H1 (cell line): ENCODE measurements at regions of chr1 and their contacts with region 1.

Region 1: DNA sequence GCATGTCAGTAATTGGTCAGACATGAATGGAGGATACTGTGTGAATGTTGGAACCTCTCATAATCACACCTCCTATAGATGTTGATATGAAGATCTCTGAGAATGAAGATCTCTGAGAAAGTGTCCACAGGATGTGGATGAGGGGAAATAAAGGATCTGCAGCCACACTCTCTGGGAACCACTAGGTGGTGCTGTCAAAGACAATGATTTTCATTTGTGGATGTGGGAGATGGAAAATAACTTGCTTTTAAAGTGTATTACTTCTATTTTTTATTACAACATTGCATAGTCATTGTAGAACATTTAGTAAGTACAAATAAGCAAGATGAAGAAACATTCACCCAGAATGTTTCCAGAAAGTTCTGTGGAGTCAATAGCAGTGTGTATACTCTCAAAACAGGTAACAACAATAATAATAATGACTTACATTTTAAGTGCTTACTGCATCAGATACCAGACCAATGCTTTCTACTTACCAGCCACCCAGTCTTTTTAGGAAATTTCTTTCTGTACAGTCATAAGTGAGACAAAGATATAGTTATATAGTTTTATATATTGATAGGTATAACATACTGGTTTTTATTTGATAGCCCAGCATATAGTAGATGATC is 128.2 kb downstream of the ATG4C start:
- DNase-seq: no peak
- H3K4me3 ChIP-seq: no peak overlapping the region
- H3K27ac ChIP-seq: no peak overlapping the region
- H3K4me1 ChIP-seq: no peaks in the 10 kb centered on the region
- H3K27me3 ChIP-seq: no peaks in the 10 kb centered on the region
- CTCF ChIP-seq: peak in 2 of 3 experiments; percentile 42 to 80; a peak in 2 of 4 replicates
- EP300 ChIP-seq: no peak
- POLR2A ChIP-seq: no peak
- RAD21 ChIP-seq: peak in 1 of 2 experiments; percentile 50; a peak in 3 of 4 replicates

Region 2: GRCh38 chr1:62712336-62713243 is 199.5 kb before region 1 on chr1:
- CTCF ChIA-PET with region 1: no interaction called
- POLR2A ChIA-PET with region 1: no interaction called
- DNase-seq: no peak
- H3K4me3 ChIP-seq: no peak overlapping the region
- H3K27ac ChIP-seq: no peak overlapping the region
- H3K4me1 ChIP-seq: no peaks in the 10 kb centered on the region
- H3K27me3 ChIP-seq: no peaks in the 10 kb centered on the region
- CTCF ChIP-seq: no peak
- EP300 ChIP-seq: no peak
- POLR2A ChIP-seq: no peak
- RAD21 ChIP-seq: no peak

Region 3: DNA sequence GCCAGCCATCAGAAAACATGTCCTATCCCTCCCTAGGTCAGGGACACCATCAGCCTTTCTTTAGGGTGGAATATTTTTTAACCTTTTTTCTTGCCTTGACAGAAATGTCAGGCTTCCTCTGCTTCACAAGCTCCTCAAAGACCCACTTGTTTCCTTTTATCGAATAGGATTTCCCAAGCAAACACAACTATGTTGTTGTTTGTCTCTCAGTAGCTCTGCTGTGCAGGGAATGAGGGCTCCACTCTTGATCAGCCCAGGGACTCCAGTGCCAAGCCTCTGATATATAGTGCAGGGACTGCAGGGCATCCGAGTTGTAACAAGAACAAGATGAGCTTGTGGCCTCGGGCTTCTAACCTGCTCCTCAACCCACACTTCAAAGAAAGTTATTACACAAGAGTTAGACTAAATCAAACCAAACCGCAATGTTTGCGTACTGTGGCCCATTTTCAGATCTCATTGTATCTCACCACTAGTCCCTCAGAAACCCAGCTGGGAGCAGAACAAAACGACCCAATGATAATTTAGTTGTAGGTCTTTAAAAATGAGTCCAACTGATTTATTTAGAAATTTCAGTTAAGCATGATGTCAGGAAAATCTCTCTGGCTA is 20.1 kb before region 1 on chr1:
- CTCF ChIA-PET with region 1: interaction called, 77 read pairs
- POLR2A ChIA-PET with region 1: no interaction called
- DNase-seq: no peak
- H3K4me3 ChIP-seq: no peak overlapping the region
- H3K27ac ChIP-seq: no peak overlapping the region
- H3K4me1 ChIP-seq: no peaks in the 10 kb centered on the region; a peak in 1 of 7 replicates
- H3K27me3 ChIP-seq: no peaks in the 10 kb centered on the region
- CTCF ChIP-seq: no peak
- EP300 ChIP-seq: no peak
- POLR2A ChIP-seq: no peak
- RAD21 ChIP-seq: no peak

Region 4: GRCh38 chr1:62926681-62927252 is 14.6 kb after region 1 on chr1:
- CTCF ChIA-PET with region 1: interaction called, 47 read pairs
- POLR2A ChIA-PET with region 1: interaction called, 3 read pairs
- DNase-seq: no peak
- H3K4me3 ChIP-seq: no peak overlapping the region
- H3K27ac ChIP-seq: no peak overlapping the region
- H3K4me1 ChIP-seq: no peaks in the 10 kb centered on the region
- H3K27me3 ChIP-seq: no peaks in the 10 kb centered on the region; a peak in 1 of 7 replicates
- CTCF ChIP-seq: peak in 1 of 3 experiments; percentile 6; a peak in 1 of 4 replicates
- EP300 ChIP-seq: no peak
- POLR2A ChIP-seq: no peak
- RAD21 ChIP-seq: peak; percentile 10 to 23; a peak in 2 of 4 replicates

Region 5: GRCh38 chr1:63024132-63024531 is 112.0 kb after region 1 on chr1:
- CTCF ChIA-PET with region 1: no interaction called
- POLR2A ChIA-PET with region 1: no interaction called
- DNase-seq: no peak
- H3K4me3 ChIP-seq: no peak overlapping the region
- H3K27ac ChIP-seq: no peak overlapping the region
- H3K4me1 ChIP-seq: no peaks in the 10 kb centered on the region
- H3K27me3 ChIP-seq: no peaks in the 10 kb centered on the region
- CTCF ChIP-seq: no peak
- EP300 ChIP-seq: no peak
- POLR2A ChIP-seq: no peak
- RAD21 ChIP-seq: no peak

Region 6: DNA sequence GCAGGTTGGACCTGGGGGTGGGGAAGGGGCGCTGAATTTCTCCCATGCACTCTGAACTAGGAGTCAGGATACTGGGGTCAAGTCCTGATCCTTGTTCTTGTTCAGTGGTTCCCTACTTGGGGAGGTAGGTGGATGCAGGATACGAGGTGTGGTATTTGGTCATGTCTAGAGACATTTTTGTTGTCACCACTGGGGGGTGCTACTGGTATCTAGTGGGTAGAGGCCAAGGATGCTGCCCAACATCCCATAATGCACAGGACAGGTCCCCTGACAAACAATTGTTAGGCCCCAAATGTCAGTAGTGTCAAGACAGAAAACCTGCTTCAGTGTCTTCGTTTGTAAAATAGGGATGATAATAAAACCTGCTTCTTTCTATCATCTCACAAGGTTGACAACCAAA is 151.2 kb after region 1 on chr1:
- CTCF ChIA-PET with region 1: no interaction called
- POLR2A ChIA-PET with region 1: no interaction called
- DNase-seq: peak in 1 of 2 experiments; percentile 80
- H3K4me3 ChIP-seq: no peak overlapping the region
- H3K27ac ChIP-seq: no peak overlapping the region
- H3K4me1 ChIP-seq: no peaks in the 10 kb centered on the region
- H3K27me3 ChIP-seq: no peaks in the 10 kb centered on the region
- CTCF ChIP-seq: peak; percentile 49 to 73 (median 69)
- EP300 ChIP-seq: no peak
- POLR2A ChIP-seq: no peak
- RAD21 ChIP-seq: peak; percentile 73 to 80